GM12878 (cell line): ENCODE measurements at regions of chr3 and their contacts with region 1.

Region 1: GRCh38 chr3:19543212-19543841 is 390.7 kb downstream of the EFHB start:
- DNase-seq: peak; percentile 25
- ATAC-seq: peak; percentile 76
- H3K4me3 ChIP-seq: no peak overlapping the region
- H3K27ac ChIP-seq: 0 out of 2 replicates have a peak overlapping the region, but pooled peaks have one; percentile 47
- H3K4me1 ChIP-seq: peaks cover 46% of the 10 kb centered on the region
- H3K27me3 ChIP-seq: no peaks in the 10 kb centered on the region
- CTCF ChIP-seq: peak; percentile 79 to 83 (median 81)
- EP300 ChIP-seq: no peak
- POLR2A ChIP-seq: no peak
- RAD21 ChIP-seq: peak; percentile 92

Region 2: GRCh38 chr3:19065027-19065426 is 478.3 kb before region 1 on chr3:
- CTCF ChIA-PET with region 1: interaction called, 3 read pairs
- POLR2A ChIA-PET with region 1: no interaction called
- RAD21 ChIA-PET with region 1: no interaction called
- SMC1A ChIA-PET with region 1: no interaction called
- in situ Hi-C with region 1: no loop called
- intact Hi-C with region 1: loop called (anchors 2 kb)
- DNase-seq: no peak
- ATAC-seq: no peak
- H3K4me3 ChIP-seq: no peak overlapping the region
- H3K27ac ChIP-seq: no peak overlapping the region
- H3K4me1 ChIP-seq: no peaks in the 10 kb centered on the region
- H3K27me3 ChIP-seq: no peaks in the 10 kb centered on the region
- CTCF ChIP-seq: peak; percentile 14 to 36 (median 17); a peak in 2 of 6 replicates
- EP300 ChIP-seq: no peak
- POLR2A ChIP-seq: no peak
- RAD21 ChIP-seq: peak; percentile 77

Region 3: GRCh38 chr3:19348929-19349564 is 194.3 kb before region 1 on chr3:
- CTCF ChIA-PET with region 1: interaction called, 51 read pairs
- POLR2A ChIA-PET with region 1: no interaction called
- RAD21 ChIA-PET with region 1: interaction called, 25 read pairs
- SMC1A ChIA-PET with region 1: interaction called, 17 read pairs
- in situ Hi-C with region 1: loop called (anchors 5 kb)
- intact Hi-C with region 1: loop called (anchors 1 kb)
- DNase-seq: no peak
- ATAC-seq: peak; percentile 97
- H3K4me3 ChIP-seq: no peak overlapping the region
- H3K27ac ChIP-seq: no peak overlapping the region
- H3K4me1 ChIP-seq: peaks cover 14% of the 10 kb centered on the region
- H3K27me3 ChIP-seq: no peaks in the 10 kb centered on the region
- CTCF ChIP-seq: peak; percentile 59 to 72 (median 70); a peak in 5 of 6 replicates
- EP300 ChIP-seq: no peak
- POLR2A ChIP-seq: no peak
- RAD21 ChIP-seq: peak; percentile 96

Region 4: GRCh38 chr3:19506171-19506570 is 37.2 kb before region 1 on chr3:
- CTCF ChIA-PET with region 1: no interaction called
- POLR2A ChIA-PET with region 1: no interaction called
- RAD21 ChIA-PET with region 1: no interaction called
- SMC1A ChIA-PET with region 1: no interaction called
- in situ Hi-C with region 1: no loop called
- intact Hi-C with region 1: no loop called
- DNase-seq: peak; percentile 1
- ATAC-seq: no peak; the same call in 2 of the 3 replicates
- H3K4me3 ChIP-seq: no peak overlapping the region
- H3K27ac ChIP-seq: no peak overlapping the region
- H3K4me1 ChIP-seq: peaks cover 11% of the 10 kb centered on the region
- H3K27me3 ChIP-seq: no peaks in the 10 kb centered on the region
- CTCF ChIP-seq: no peak
- EP300 ChIP-seq: no peak
- POLR2A ChIP-seq: no peak
- RAD21 ChIP-seq: no peak

Region 5: DNA sequence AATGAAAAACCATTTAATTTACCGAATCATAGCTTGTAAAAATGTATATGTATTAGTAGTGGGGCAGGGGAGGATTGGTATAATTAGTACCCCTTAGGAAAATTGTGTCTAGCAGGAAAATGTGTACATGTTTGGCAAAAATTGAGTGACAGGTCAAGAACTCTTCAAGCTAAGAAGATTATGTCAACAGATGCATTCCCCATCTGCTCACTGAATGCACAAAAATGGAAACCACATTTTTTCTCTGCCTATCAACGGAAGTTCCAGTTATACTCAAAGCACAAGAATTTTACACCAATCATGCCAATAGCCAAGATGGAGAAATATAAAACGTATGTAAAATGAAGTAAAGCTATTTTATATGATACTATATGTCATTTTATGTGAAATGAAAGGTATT is 17.3 kb before region 1 on chr3:
- CTCF ChIA-PET with region 1: interaction called, 6 read pairs
- POLR2A ChIA-PET with region 1: no interaction called
- RAD21 ChIA-PET with region 1: no interaction called
- SMC1A ChIA-PET with region 1: interaction called, 11 read pairs
- in situ Hi-C with region 1: no loop called
- intact Hi-C with region 1: no loop called
- DNase-seq: no peak
- ATAC-seq: no peak
- H3K4me3 ChIP-seq: no peak overlapping the region
- H3K27ac ChIP-seq: no peak overlapping the region
- H3K4me1 ChIP-seq: no peaks in the 10 kb centered on the region
- H3K27me3 ChIP-seq: no peaks in the 10 kb centered on the region
- CTCF ChIP-seq: no peak
- EP300 ChIP-seq: no peak
- POLR2A ChIP-seq: no peak
- RAD21 ChIP-seq: no peak